ENCODE measurements at regions of chr3 and their contacts with region 1.

Region 1: GRCh38 chr3:117281371-117281770 is 571.8 kb downstream of the TUSC7 start:
- DNase-seq: no peak
- H3K4me3 ChIP-seq: no peak overlapping the region
- H3K27ac ChIP-seq: no peak overlapping the region
- H3K4me1 ChIP-seq: no peaks in the 10 kb centered on the region
- H3K27me3 ChIP-seq: no peaks in the 10 kb centered on the region
- CTCF ChIP-seq: no peak
- POLR2A ChIP-seq: no peak

Region 2: GRCh38 chr3:117217355-117217754 is 64.0 kb before region 1 on chr3:
- intact Hi-C with region 1: loop called (anchors 5 kb)
- DNase-seq: no peak
- H3K4me3 ChIP-seq: no peak overlapping the region
- H3K27ac ChIP-seq: no peak overlapping the region
- H3K4me1 ChIP-seq: no peaks in the 10 kb centered on the region
- H3K27me3 ChIP-seq: no peaks in the 10 kb centered on the region
- CTCF ChIP-seq: no peak
- POLR2A ChIP-seq: no peak

Region 3: DNA sequence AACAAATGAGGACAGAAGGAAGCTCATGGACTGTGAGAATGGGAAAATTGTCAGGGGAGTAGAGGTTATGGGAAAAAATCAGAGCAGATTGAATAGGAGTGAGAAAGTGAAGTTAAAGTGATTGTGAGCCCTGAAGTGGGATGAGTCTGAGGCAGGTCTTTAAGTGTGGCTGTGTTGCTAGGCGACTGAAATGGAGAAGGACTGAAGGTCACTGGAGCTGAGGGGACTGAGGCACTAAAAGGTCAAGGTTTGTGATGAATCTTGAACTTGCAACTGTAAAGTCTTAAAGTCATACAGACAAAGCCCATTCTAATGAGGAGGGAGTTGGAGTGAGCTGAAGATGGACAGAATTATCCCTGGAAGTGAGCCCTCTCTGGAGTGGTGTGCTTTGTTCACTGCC is 52.9 kb before region 1 on chr3:
- intact Hi-C with region 1: no loop called
- DNase-seq: no peak
- H3K4me3 ChIP-seq: no peak overlapping the region
- H3K27ac ChIP-seq: no peak overlapping the region
- H3K4me1 ChIP-seq: no peaks in the 10 kb centered on the region
- H3K27me3 ChIP-seq: no peaks in the 10 kb centered on the region
- CTCF ChIP-seq: no peak
- POLR2A ChIP-seq: no peak

Measured in breast epithelium (tissue), 4 donors.